ENCODE measurements at regions of chr2 and their contacts with region 1.

Region 1: DNA sequence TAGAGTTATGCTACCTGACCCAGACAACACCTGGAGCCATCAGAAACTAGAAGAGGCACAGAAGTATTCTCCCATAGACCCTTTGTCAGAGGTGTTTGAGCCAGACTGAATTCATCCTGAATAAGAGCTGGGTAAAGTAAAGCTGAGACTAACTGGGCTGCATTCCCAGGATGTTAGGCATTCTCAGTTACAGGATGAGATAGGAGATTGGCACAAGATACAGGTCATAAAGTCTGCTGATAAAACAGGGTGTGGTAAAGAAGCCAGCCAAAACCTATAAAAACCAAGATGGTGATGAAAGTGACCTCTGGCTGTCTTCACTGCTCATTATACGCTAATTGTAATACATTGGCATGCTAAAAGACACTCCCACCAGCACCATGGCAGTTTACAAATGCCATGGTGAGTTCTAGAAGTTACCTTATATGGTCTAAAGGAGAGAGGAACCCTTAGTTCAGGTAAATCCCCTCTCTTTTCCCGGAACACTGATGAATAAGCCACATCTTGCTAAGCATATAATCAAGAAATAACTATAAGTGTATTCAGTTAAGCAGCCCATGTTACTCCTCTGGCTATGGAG is 364.9 kb upstream of the TMEFF2 start:
- DNase-seq: no peak
- H3K4me3 ChIP-seq: no peak overlapping the region
- CTCF ChIP-seq: no peak
- POLR2A ChIP-seq: no peak

Region 2: DNA sequence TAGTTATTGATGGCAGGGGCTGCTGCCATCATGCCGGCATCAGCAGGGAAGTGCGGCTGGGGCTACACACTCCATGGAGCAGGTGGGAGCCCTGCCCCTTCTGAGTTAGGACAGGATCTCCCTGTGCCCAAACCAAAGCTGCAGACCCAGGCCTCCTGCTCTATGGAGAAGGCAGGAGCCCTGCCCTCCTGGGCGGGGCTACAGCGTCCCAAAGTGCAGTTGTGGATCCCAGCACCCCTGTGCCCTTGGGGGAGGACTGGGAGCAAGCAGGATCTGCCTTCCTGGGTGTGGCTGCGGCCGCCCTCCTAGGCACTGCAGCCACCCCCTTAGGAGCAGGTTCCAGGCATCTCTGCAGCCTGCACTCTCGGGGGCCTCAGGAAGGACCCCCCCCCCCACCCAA is 1705.0 kb after region 1 on chr2:
- intact Hi-C with region 1: loop called (anchors 5 kb)
- DNase-seq: no peak
- H3K4me3 ChIP-seq: no peak overlapping the region
- CTCF ChIP-seq: no peak
- POLR2A ChIP-seq: no peak

Measured in lower leg skin (tissue), 4 donors.